ENCODE measurements at regions of chr9 and their contacts with region 1.

Region 1: GRCh38 chr9:114385412-114386181 is 2.2 kb downstream of the AKNA start:
- DNase-seq: peak; percentile 89
- H3K4me3 Mint-ChIP-seq: peak overlapping the region; percentile 90
- H3K27ac Mint-ChIP-seq: peak overlapping the region; percentile 93
- H3K4me1 Mint-ChIP-seq: peaks cover 69% of the 10 kb centered on the region
- H3K27me3 Mint-ChIP-seq: no peaks in the 10 kb centered on the region

Region 2: DNA sequence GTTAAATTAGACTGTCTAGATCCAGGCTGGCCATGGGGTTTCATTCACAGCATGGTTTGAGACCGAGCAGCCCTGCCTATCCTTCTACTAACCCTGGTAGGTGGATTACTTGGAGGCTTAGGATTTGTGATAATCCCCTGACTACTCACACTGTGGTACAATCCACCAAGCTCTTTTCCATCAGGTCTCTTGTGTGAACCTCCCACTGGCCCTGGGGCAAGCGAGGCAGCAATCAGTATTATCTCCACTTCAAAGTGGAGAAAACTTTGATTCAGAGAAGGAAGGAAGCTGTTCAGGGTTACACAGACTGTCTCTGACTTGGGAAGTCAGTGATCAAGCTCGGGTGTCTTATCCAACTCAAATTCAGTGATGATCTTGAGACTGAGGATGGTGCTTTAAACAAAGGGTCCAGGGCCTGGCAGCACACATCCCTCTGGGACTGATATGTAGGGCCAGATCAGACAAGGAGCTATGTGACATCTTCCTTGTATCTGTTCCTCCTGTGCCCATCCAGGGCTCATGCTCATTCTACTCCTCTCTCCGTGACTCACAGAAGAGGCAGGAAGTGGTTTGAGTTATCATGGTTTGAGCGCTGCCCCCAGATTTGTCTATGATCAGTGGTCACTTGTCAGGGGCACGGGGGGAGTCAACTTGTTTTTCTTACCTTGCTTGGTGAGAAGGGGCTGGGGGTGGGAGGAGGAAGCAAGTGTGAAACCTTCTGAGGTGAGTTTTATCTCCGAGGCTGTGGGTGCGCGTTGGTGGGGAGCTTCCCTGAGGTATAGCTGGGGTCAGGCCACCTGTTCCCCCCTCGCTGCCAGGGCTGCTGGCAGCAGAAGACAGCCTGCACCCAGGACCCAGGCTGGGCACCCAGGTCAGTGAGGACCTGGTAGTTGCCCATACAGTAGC is 873.5 kb before region 1 on chr9:
- intact Hi-C with region 1: loop called (anchors 10 kb)
- DNase-seq: peak; percentile 57
- H3K4me3 Mint-ChIP-seq: peak overlapping the region; percentile 62
- H3K27ac Mint-ChIP-seq: peak overlapping the region; percentile 90
- H3K4me1 Mint-ChIP-seq: peaks cover 76% of the 10 kb centered on the region
- H3K27me3 Mint-ChIP-seq: peaks cover 3% of the 10 kb centered on the region

Region 3: GRCh38 chr9:113646946-113647914 is 738.4 kb before region 1 on chr9:
- intact Hi-C with region 1: no loop called
- DNase-seq: no peak
- H3K4me3 Mint-ChIP-seq: no peak overlapping the region
- H3K27ac Mint-ChIP-seq: no peak overlapping the region
- H3K4me1 Mint-ChIP-seq: peaks cover 9% of the 10 kb centered on the region
- H3K27me3 Mint-ChIP-seq: peaks cover 23% of the 10 kb centered on the region

Region 4: DNA sequence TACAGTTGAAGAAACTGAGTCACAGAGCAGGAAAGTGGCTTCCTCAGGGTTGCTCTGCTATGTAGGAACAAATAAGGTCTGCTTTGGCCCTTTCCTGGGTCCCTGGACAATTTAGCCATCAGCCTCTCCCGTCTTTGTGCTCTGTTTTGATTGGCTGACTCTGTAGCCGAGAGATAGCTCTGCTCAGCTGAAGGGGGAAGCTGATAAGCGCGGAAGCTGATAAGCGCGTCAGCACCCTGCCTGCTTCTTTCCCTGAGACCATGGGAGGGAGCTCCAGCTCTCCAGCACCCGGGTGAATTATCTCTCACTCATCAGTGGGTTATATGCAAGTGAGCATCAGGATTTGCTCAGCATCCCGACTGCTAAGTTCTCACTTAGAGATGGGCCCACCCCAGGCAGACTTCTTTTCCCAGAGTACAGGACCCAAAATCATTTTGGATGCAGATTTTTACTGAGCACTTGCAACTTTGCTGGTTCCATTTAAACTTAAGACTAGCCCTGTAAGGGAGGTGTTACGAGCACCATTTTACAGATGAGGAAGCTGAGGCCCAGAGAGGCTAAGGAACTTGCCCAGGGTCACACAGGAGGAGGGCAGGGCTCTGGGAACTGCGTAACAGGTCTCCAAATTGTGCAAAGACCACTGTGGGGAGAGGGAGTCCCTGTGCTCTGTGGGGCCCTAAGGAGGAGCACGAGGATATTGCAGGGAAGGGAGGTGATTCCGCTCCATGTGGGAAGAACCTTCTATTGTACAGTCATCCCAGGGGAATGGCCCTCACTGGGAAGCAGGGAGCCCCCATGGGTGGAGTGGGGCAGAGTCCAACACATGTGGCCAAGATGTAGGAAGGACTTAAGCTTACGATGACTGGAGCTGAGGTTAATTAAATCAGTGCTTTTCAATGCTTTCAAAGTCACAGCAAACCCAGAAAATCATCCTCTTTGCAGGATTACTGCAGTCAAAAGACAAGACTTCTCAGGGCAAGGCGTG is 146.4 kb before region 1 on chr9:
- intact Hi-C with region 1: no loop called
- DNase-seq: no peak
- H3K4me3 Mint-ChIP-seq: no peak overlapping the region
- H3K27ac Mint-ChIP-seq: no peak overlapping the region
- H3K4me1 Mint-ChIP-seq: no peaks in the 10 kb centered on the region
- H3K27me3 Mint-ChIP-seq: peaks cover 4% of the 10 kb centered on the region

Region 5: DNA sequence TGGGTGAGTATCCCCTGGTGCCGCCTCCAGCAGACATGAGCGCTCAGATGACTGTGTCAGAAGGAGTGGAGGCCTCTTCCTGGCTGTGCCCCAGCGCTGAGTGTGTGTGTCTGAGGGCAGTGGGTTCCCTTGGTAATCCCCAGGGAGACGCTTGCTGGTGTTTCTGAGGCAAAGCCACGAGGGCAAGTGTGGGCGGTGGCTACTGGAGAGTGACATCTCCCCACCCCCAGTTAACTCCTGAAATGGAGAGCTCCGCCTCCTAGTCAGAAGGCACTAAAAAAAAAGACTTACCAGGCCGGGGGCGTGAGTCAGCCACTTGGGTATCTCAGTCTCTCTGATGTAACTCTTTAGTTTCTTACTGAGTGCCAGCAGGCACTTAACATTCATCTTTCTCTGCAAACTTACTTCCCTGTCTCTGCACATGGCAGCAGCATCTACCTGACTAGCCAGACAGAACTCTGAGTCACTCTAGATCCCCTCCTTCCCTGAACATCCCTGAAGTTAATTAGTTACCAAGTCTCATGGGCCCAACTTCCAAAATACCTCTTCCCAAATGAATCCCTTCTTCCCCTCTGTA is 36.6 kb before region 1 on chr9:
- intact Hi-C with region 1: loop called (anchors 1 kb)
- DNase-seq: peak; percentile 62
- H3K4me3 Mint-ChIP-seq: peak overlapping the region; percentile 72
- H3K27ac Mint-ChIP-seq: peak overlapping the region; percentile 97
- H3K4me1 Mint-ChIP-seq: peaks cover 56% of the 10 kb centered on the region
- H3K27me3 Mint-ChIP-seq: no peaks in the 10 kb centered on the region

Region 6: GRCh38 chr9:114397848-114398605 is 12.4 kb after region 1 on chr9:
- intact Hi-C with region 1: loop called (anchors 1 kb)
- DNase-seq: peak; percentile 94
- H3K4me3 Mint-ChIP-seq: peak overlapping the region; percentile 97
- H3K27ac Mint-ChIP-seq: peak overlapping the region; percentile 86
- H3K4me1 Mint-ChIP-seq: peaks cover 46% of the 10 kb centered on the region
- H3K27me3 Mint-ChIP-seq: peaks cover 3% of the 10 kb centered on the region

Region 7: GRCh38 chr9:114551883-114552685 is 166.5 kb after region 1 on chr9:
- intact Hi-C with region 1: no loop called
- DNase-seq: no peak
- H3K4me3 Mint-ChIP-seq: no peak overlapping the region
- H3K27ac Mint-ChIP-seq: no peak overlapping the region
- H3K4me1 Mint-ChIP-seq: no peaks in the 10 kb centered on the region
- H3K27me3 Mint-ChIP-seq: peaks cover 14% of the 10 kb centered on the region

Region 8: DNA sequence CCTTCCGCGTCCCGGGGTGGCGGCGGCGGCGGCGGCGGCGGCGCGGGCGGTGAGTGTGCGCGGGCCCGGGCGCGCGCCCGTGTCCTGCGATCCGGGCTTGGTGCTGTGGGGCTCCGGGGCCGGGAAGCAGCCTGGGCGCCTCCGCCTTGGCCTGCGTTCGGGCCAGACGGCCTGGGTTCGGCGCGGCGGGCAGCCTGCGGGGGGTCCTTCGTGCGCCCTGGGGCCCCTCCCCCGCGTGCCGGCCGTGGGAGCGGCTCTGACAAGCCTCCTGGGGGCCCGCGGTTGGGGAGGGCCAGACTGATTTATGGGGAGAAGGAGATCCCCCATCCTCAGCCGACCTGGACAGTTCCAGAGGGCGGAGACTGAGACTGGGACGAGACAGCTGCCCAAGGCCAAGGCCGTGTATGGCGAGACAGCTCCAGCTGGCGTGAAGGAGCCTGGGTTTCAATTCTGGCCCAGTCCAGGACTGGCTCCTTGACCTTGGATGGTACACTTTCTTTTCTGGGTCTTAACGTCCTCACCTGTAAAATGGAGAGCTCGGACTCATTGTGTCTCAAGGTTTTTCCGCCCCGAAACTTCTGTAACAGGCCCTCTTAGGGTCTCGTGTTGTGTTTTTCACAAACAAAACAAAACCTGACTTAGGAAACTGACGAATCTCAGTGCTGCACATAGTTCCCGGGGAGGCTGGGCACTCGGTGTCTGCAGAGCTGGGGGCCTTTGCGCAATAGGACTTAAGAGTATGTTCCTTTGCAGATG is 226.1 kb after region 1 on chr9:
- intact Hi-C with region 1: loop called (anchors 1 kb)
- DNase-seq: no peak
- H3K4me3 Mint-ChIP-seq: peak overlapping the region; percentile 89
- H3K27ac Mint-ChIP-seq: peak overlapping the region; percentile 86
- H3K4me1 Mint-ChIP-seq: peaks cover 50% of the 10 kb centered on the region
- H3K27me3 Mint-ChIP-seq: peaks cover 2% of the 10 kb centered on the region